IMR-90 (cell line): ENCODE measurements at regions of chr13 and their contacts with region 1.

Region 1: GRCh38 chr13:85806553-85807175 is 7.4 kb upstream of the SLITRK6 start:
- DNase-seq: peak; percentile 61
- ATAC-seq: peak; percentile 82
- H3K4me3 ChIP-seq: no peak overlapping the region
- H3K27ac ChIP-seq: no peak overlapping the region
- H3K4me1 ChIP-seq: no peaks in the 10 kb centered on the region
- H3K27me3 ChIP-seq: no peaks in the 10 kb centered on the region
- CTCF ChIP-seq: peak; percentile 75
- POLR2A ChIP-seq: no peak
- RAD21 ChIP-seq: peak; percentile 88

Region 2: GRCh38 chr13:84896128-84896527 is 910.5 kb before region 1 on chr13:
- CTCF ChIA-PET with region 1: interaction called, 4 read pairs
- POLR2A ChIA-PET with region 1: no interaction called
- dilution Hi-C with region 1: no loop called
- in situ Hi-C with region 1: no loop called
- intact Hi-C with region 1: loop called (anchors 1 kb)
- DNase-seq: peak; percentile 61
- ATAC-seq: peak; percentile 65
- H3K4me3 ChIP-seq: no peak overlapping the region
- H3K27ac ChIP-seq: no peak overlapping the region
- H3K4me1 ChIP-seq: no peaks in the 10 kb centered on the region
- H3K27me3 ChIP-seq: no peaks in the 10 kb centered on the region
- CTCF ChIP-seq: peak; percentile 75
- POLR2A ChIP-seq: no peak
- RAD21 ChIP-seq: peak; percentile 83

Region 3: GRCh38 chr13:84917252-84917878 is 889.3 kb before region 1 on chr13:
- CTCF ChIA-PET with region 1: no interaction called
- POLR2A ChIA-PET with region 1: no interaction called
- dilution Hi-C with region 1: no loop called
- in situ Hi-C with region 1: loop called (anchors 5 kb)
- intact Hi-C with region 1: loop called (anchors 1 kb)
- DNase-seq: peak; percentile 31
- ATAC-seq: peak; percentile 82
- H3K4me3 ChIP-seq: no peak overlapping the region
- H3K27ac ChIP-seq: no peak overlapping the region
- H3K4me1 ChIP-seq: no peaks in the 10 kb centered on the region
- H3K27me3 ChIP-seq: no peaks in the 10 kb centered on the region
- CTCF ChIP-seq: peak; percentile 50
- POLR2A ChIP-seq: no peak
- RAD21 ChIP-seq: peak; percentile 42

Region 4: DNA sequence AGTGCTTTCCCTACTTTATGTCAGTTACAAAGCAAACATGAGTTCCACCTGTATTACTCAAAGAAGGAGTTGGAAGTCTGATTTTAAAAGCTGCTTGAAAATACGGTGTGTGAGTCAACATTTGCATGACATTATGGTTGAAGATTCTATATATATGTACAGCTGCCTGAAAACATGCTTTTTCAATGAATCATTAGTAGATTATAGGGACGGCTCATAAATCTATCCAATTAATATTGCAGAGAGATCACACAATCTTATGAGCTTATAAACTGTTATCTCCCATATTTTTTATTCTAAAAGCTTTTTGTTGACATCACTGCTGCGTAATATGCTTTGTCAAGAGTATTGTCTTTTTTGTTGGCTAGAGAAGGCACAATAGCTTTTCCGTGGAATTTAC is 881.2 kb before region 1 on chr13:
- CTCF ChIA-PET with region 1: no interaction called
- POLR2A ChIA-PET with region 1: no interaction called
- dilution Hi-C with region 1: loop called (anchors 25 kb)
- in situ Hi-C with region 1: no loop called
- intact Hi-C with region 1: no loop called
- DNase-seq: peak; percentile 49
- ATAC-seq: peak; percentile 27; the same call in 1 of the 2 replicates
- H3K4me3 ChIP-seq: no peak overlapping the region
- H3K27ac ChIP-seq: no peak overlapping the region
- H3K4me1 ChIP-seq: no peaks in the 10 kb centered on the region
- H3K27me3 ChIP-seq: no peaks in the 10 kb centered on the region
- CTCF ChIP-seq: no peak
- POLR2A ChIP-seq: no peak
- RAD21 ChIP-seq: no peak